ENCODE measurements at regions of chr14 and their contacts with region 1.

Region 1: DNA sequence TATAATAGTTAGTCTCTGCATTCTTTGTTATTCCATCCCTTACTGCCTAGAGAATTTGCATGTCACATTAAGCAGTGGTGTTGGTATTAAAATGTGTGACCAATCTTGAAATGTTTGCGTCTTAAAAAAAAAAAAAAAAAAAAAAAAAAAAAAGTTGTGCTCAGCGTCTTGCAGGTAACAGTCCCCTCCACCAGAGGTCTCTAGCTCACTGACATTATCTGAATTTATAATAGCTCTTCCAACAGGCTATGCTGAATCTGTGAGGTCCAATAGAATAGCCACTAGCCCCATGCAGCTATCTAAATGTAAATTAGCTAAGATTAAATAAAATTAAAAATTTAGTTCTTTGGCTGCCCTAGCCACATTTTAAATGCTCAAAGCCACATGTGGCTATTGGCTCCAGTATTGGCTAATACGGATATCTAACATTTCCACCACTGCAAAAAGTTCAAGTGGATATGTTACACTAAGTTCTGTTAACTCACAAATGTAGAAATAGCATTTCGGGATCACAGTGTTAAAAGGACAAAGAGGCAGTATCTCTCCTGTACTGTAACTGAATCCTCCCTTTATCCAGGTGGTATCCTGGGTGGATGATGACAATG is 28.7 kb downstream of the NKX2-8 start:
- DNase-seq: peak; percentile 59 to 84
- H3K4me3 ChIP-seq: no peak overlapping the region
- H3K4me1 ChIP-seq: no peaks in the 10 kb centered on the region
- H3K27me3 ChIP-seq: no peaks in the 10 kb centered on the region

Region 2: DNA sequence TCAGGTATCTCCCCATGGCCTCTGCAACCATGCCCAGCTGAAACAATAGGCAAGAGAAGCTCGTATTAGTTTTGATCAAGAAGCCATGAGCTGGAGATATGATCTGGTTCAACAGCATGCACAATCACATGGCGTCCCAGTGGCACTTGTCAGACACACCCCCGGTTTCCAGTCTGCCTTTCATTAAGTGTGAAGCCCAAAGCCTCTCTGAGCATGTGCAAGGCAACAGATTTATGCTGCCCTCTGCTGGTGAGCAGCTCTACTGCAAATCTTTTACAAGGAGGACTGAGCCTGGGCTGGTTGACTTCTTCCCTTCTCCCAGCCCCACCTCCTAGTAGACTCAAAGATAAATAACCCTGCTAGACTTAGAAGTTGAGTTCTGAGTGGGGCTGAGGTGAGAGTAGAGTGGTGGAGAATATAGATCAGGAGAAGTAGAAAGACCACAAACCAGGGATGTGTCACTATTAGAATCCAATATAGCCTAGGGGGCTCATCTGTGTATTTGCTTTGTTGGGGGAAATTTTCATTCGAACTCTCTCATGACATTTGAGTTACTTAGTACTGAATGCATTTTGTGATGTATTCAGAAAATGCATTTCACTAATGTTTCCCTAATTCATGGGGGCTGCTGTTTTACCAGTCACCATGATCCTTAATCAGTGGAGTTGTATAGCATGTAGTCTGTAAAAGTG is 179.6 kb before region 1 on chr14:
- in situ Hi-C with region 1: no loop called
- DNase-seq: peak; percentile 81 to 92
- H3K4me3 ChIP-seq: no peak overlapping the region
- H3K4me1 ChIP-seq: no peaks in the 10 kb centered on the region
- H3K27me3 ChIP-seq: no peaks in the 10 kb centered on the region

Region 3: GRCh38 chr14:36604757-36605505 is 51.2 kb after region 1 on chr14:
- in situ Hi-C with region 1: loop called (anchors 5 kb)
- DNase-seq: peak; percentile 73 to 80
- H3K4me3 ChIP-seq: no peak overlapping the region
- H3K4me1 ChIP-seq: no peaks in the 10 kb centered on the region
- H3K27me3 ChIP-seq: no peaks in the 10 kb centered on the region

Region 4: GRCh38 chr14:36627981-36628380 is 74.2 kb after region 1 on chr14:
- in situ Hi-C with region 1: no loop called
- DNase-seq: no peak
- H3K4me3 ChIP-seq: no peak overlapping the region
- H3K4me1 ChIP-seq: no peaks in the 10 kb centered on the region
- H3K27me3 ChIP-seq: no peaks in the 10 kb centered on the region

Measured in HAP-1 (cell line).